PC-3 (cell line): ENCODE measurements at regions of chr3 and their contacts with region 1.

Region 1: GRCh38 chr3:156674046-156674910 is at the start of gene TIPARP:
- DNase-seq: peak; percentile 99
- ATAC-seq: peak; percentile 79
- H3K4me3 ChIP-seq: peak within 1 kb of the TSS; percentile 96
- H3K27ac ChIP-seq: peak within 1 kb of the TSS; percentile 78
- H3K4me1 ChIP-seq: peaks cover 37% of the 10 kb centered on the region
- H3K27me3 ChIP-seq: no peaks in the 10 kb centered on the region
- CTCF ChIP-seq: peak; percentile 84
- total RNA-seq, gene TIPARP: 84.7 and 85.5 TPM in 2 replicates

Region 2: GRCh38 chr3:156449712-156450574 is 224.3 kb before region 1 on chr3:
- CTCF ChIA-PET with region 1: no interaction called
- POLR2A ChIA-PET with region 1: no interaction called
- intact Hi-C with region 1: loop called (anchors 5 kb)
- DNase-seq: peak; percentile 64
- ATAC-seq: peak; percentile 88
- H3K4me3 ChIP-seq: no peak overlapping the region
- H3K27ac ChIP-seq: no peak overlapping the region
- H3K4me1 ChIP-seq: no peaks in the 10 kb centered on the region
- H3K27me3 ChIP-seq: peaks cover 23% of the 10 kb centered on the region
- CTCF ChIP-seq: peak; percentile 82

Region 3: GRCh38 chr3:156554842-156555687 is 119.2 kb before region 1 on chr3 and contains the start of gene SSR3:
- CTCF ChIA-PET with region 1: interaction called, 5 read pairs
- POLR2A ChIA-PET with region 1: interaction called, 3 read pairs
- intact Hi-C with region 1: loop called (anchors 1 kb)
- DNase-seq: peak; percentile 99
- ATAC-seq: peak; percentile 99
- H3K4me3 ChIP-seq: peak within 1 kb of the TSS; percentile 96
- H3K27ac ChIP-seq: peak within 1 kb of the TSS; percentile 54
- H3K4me1 ChIP-seq: peaks cover 36% of the 10 kb centered on the region
- H3K27me3 ChIP-seq: no peaks in the 10 kb centered on the region
- CTCF ChIP-seq: no peak
- total RNA-seq, gene SSR3: 171 and 178 TPM in 2 replicates

Region 4: DNA sequence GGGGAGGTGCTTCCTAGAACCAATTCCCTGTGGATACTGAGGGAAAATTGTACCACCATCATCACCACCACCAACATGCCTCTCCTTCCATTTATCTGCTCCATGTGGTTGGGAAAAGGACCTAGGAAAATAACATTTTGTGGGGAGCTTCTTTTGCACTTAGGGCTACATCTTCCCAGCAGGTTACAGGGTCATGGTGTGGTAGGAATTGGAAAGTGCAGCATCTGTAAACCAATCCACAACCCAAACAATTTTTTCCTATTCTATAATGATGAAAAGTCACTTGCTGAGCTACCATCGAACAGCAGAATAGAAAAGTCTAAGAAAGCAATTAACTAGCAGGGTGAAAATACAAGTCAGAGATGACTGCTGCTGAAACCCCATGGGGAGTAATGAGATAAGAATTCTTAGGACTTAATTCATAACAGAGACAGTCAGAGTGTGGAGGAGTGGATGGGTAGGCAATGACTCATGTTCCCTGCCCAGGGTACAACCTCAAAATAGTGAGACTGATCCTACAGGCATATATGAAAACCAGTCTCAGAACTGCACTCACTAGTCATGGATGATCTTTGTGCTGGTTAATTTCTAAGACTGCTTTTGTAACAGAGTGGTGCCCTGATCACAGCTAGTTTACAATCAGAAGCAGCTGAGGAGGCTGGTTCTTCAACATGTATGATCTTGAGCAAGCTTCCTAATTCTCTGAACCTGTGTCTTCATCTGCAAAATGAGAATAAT is 113.8 kb after region 1 on chr3:
- CTCF ChIA-PET with region 1: interaction called, 3 read pairs
- POLR2A ChIA-PET with region 1: no interaction called
- intact Hi-C with region 1: loop called (anchors 1 kb)
- DNase-seq: peak; percentile 94
- ATAC-seq: peak; percentile 73
- H3K4me3 ChIP-seq: peak overlapping the region; percentile 28; the same call in 1 of the 2 replicates
- H3K27ac ChIP-seq: peak overlapping the region; percentile 91
- H3K4me1 ChIP-seq: peaks cover 59% of the 10 kb centered on the region
- H3K27me3 ChIP-seq: no peaks in the 10 kb centered on the region
- CTCF ChIP-seq: no peak

Region 5: DNA sequence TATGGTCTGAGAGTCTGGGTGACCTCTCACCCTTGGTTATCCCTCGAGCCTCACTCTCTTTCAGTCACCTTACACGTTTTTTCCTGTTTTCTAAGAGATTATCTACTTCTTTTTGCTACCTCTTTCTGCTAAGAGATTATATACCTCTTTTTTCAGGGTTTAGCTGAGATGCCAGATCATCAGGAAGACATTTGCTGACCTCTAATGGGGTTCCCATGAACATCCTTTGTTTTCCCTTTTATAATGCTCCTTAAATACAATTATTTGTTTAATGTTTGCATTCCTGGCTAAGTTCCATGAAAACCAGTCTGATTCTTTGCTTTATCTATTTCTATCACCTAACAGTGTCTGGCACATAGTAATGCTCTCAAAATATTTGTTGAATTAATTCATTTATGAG is 191.5 kb after region 1 on chr3:
- CTCF ChIA-PET with region 1: no interaction called
- POLR2A ChIA-PET with region 1: no interaction called
- intact Hi-C with region 1: loop called (anchors 1 kb)
- DNase-seq: peak; percentile 32
- ATAC-seq: peak; percentile 25
- H3K4me3 ChIP-seq: no peak overlapping the region
- H3K27ac ChIP-seq: peak overlapping the region; percentile 29
- H3K4me1 ChIP-seq: peaks cover 38% of the 10 kb centered on the region
- H3K27me3 ChIP-seq: no peaks in the 10 kb centered on the region
- CTCF ChIP-seq: 0 out of 2 replicates have a peak, but pooled peaks have one; percentile 12

Region 6: DNA sequence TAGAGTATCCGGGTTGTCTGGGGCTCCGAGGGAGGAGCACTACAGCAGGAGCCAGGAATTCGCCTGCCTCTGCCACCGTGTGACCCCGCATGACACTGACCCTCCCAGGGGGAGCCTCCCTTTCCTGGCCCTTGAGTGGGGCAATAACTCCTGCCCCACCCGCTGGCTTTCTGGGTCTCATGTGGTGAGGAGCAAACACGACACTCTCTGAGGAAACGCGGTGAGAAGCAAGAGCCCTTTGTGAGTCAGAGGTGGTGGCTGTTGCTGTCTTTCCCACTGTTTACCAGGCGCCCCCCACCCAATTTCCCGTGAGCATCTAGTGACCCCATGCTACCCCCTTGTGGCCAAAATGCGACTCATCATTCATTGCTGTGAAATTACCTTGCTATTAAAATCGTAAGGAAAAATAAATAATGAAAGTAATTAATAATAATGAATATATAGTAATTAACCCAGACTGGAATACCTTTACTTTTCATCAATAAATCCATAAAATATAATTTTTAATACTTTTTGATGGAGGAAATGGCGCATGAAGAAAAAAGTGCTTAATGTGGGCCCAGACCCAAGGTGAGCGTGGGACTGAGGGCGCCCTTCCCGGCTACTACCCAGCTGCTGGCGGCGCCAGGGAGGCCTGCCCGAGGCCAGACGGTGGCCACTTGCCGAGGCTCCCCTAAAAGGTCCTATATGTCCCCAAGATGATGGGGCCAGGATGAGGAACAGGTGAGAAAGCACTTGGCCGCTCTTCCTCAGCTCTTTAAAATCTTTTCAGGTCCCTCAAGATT is 456.4 kb after region 1 on chr3:
- CTCF ChIA-PET with region 1: no interaction called
- POLR2A ChIA-PET with region 1: no interaction called
- intact Hi-C with region 1: loop called (anchors 1 kb)
- DNase-seq: peak; percentile 95
- ATAC-seq: peak; percentile 49
- H3K4me3 ChIP-seq: peak overlapping the region; percentile 33; the same call in 1 of the 2 replicates
- H3K27ac ChIP-seq: peak overlapping the region; percentile 99
- H3K4me1 ChIP-seq: peaks cover 98% of the 10 kb centered on the region
- H3K27me3 ChIP-seq: no peaks in the 10 kb centered on the region
- CTCF ChIP-seq: peak; percentile 76